Activated T-helper 1 cell treated with anti-CD3 and anti-CD28 coated beads, Interleukin-12 subunit alpha, Interleukin-12 subunit beta, Interleukin-2, Interleukin-4 antibody, amounts not matched to agents 30 ng/mL and 10 ng/mL and 1 ng/mL, durations not matched to agents 14 hours and 24 hours and 36 hours (primary cell): ENCODE measurements at regions of chr10 and their contacts with region 1.

Region 1: GRCh38 chr10:103888113-103888841 is 29.7 kb downstream of the STN1 start:
- DNase-seq: no peak
- H3K4me3 Mint-ChIP-seq: no peak overlapping the region
- H3K27ac Mint-ChIP-seq: peak overlapping the region; percentile 73
- H3K4me1 Mint-ChIP-seq: peaks cover 32% of the 10 kb centered on the region
- H3K27me3 Mint-ChIP-seq: no peaks in the 10 kb centered on the region

Region 2: DNA sequence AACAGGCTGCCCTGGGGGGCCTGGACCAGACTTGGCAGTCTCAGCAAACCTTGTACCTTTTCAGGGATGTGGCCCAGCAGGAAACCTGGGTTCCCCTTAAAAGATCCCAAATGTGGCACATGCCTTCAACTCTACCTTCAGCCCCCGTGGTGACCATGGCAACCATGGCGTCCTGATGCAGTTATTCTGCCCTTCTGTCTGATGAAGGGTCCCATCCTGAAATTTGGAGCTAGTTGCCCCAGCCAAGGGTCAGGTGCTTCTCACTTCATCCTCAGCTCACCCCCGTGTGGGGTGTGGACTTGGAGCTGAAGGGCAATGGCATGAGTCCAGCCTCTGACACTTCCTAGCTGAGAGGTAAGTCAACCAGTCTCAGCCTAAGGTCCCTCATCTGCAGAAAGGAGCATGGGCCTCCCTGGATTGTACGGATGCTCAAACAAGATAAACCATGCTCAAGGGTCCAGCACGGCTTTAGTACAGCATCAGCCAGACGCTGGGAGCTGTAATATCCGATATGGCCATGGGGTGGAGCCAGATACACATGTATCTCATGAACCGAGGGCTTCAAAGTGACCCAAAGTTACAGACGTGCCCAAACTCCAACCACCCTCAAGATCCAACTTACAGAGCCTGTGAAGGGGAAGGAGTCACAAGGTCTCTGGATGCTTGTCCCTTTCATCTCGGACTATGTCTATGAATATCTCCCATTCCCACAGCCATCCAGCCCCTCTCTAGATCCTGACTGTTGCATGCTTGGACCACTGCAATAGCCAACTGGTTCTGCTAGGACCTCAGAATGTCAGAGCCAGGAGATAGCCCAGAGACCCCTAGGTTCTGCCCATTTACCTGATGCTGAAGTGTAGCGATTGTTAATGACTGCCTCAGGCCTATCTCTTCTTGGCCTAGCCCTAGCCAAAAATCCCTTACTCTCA is 175.4 kb before region 1 on chr10:
- intact Hi-C with region 1: loop called (anchors 1 kb)
- DNase-seq: peak; percentile 73
- H3K4me3 Mint-ChIP-seq: no peak overlapping the region
- H3K27ac Mint-ChIP-seq: no peak overlapping the region
- H3K4me1 Mint-ChIP-seq: peaks cover 10% of the 10 kb centered on the region
- H3K27me3 Mint-ChIP-seq: peaks cover 5% of the 10 kb centered on the region

Region 3: DNA sequence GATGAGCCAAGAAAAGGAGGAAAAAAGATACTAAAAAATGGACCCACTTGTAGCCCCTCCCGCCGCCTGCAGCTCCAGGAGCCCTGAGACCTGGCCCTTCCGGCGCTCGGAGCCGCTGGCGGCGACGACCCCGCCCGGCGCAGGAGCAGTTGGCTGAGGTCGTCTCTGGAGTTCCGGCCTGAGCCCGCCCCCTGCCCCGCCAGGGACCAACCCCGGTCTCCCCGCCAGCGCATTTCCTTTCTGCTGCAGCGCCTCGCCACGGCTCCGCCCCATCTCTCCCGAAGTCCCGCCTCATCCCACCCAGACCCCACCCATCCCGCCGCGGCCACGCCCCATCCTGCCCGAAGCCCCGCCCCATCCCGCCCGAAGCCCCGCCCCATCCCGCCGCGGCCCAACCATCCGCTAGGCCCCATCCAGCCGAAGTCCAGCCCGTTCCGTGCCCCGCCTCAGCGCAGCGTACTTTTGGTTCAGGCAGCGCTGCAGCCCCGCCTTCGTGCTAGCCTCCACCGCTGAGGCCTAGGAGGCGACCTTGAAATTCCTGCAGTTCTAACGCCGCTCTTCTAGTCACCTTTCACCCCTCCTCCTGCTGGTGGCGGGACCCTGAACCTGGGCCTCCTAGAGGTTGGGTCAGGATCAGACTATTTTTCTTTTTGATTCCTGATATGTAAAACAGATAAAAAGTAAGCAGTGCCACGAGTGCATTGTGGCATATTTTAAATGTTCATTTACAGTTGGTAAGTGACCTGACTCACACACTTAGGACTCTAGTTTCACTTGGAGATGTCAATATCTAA is 30.0 kb after region 1 on chr10 and contains the start of gene STN1:
- intact Hi-C with region 1: loop called (anchors 1 kb)
- DNase-seq: peak; percentile 94
- H3K4me3 Mint-ChIP-seq: peak within 1 kb of the TSS; percentile 93
- H3K27ac Mint-ChIP-seq: peak within 1 kb of the TSS; percentile 94
- H3K4me1 Mint-ChIP-seq: peaks cover 36% of the 10 kb centered on the region
- H3K27me3 Mint-ChIP-seq: no peaks in the 10 kb centered on the region
- total RNA-seq, gene STN1: 19.4 and 20.0 TPM in 2 replicates

Region 4: GRCh38 chr10:103983367-103983911 is 95.2 kb after region 1 on chr10:
- intact Hi-C with region 1: loop called (anchors 1 kb)
- DNase-seq: peak; percentile 16
- H3K4me3 Mint-ChIP-seq: peak overlapping the region; percentile 20
- H3K27ac Mint-ChIP-seq: peak overlapping the region; percentile 67
- H3K4me1 Mint-ChIP-seq: peaks cover 62% of the 10 kb centered on the region
- H3K27me3 Mint-ChIP-seq: no peaks in the 10 kb centered on the region

Region 5: GRCh38 chr10:104080762-104081161 is 192.5 kb after region 1 on chr10:
- intact Hi-C with region 1: loop called (anchors 1 kb)
- DNase-seq: no peak
- H3K4me3 Mint-ChIP-seq: no peak overlapping the region
- H3K27ac Mint-ChIP-seq: no peak overlapping the region
- H3K4me1 Mint-ChIP-seq: no peaks in the 10 kb centered on the region
- H3K27me3 Mint-ChIP-seq: peaks cover 8% of the 10 kb centered on the region

Region 6: DNA sequence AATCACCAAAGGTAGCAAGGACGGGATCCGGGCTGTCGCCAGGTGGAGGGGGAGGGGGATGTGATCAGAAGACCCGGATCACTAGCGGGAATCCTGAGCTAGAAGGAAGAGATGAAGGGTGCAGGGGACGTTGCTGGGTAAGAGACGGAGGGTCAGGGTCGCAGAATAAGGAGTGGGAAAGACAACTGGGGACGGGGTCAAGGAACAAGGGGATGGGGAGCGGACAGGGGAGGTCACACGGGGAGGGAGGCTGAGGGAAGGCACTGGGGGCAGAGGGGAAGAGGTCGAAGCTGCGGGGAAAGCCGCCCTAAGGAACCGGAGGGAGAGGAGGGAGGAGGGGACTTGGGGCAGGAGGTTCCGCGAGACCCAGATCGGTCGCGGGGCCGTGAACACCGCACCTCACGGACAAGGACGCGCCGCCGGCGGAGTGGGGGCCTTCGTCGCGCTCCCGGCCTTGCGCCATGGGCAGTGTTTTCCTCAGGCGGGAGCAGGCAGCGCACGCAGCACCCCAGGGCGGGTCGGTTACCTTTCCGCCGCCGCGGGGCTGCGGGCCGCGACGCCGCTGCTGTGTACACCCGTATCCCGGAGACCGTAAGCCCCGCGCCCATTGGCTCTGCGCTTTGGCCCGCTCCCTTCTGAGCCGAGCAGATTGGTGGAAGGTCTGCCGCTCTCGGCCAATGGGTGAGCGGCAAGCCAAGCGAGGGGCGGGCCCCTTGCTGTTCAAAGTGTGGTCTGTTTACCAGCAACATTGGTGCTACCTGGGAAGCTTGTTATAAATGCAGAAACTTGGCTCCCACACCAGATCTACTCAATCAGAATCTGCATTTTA is 343.7 kb after region 1 on chr10 and contains the start of gene CFAP43:
- intact Hi-C with region 1: loop called (anchors 1 kb)
- DNase-seq: peak; percentile 99
- H3K4me3 Mint-ChIP-seq: peak within 1 kb of the TSS; percentile 82
- H3K27ac Mint-ChIP-seq: peak within 1 kb of the TSS; percentile 63
- H3K4me1 Mint-ChIP-seq: peaks cover 12% of the 10 kb centered on the region
- H3K27me3 Mint-ChIP-seq: peaks cover 33% of the 10 kb centered on the region
- total RNA-seq, gene CFAP43: not detected in 2 replicates